GM13976 (cell line): ENCODE measurements at regions of chr18 and their contacts with region 1.

Region 1: GRCh38 chr18:48445540-48445939 is 36.4 kb upstream of the ZBTB7C start:
- DNase-seq: peak; percentile 70
- CTCF ChIP-seq: peak; percentile 88

Region 2: DNA sequence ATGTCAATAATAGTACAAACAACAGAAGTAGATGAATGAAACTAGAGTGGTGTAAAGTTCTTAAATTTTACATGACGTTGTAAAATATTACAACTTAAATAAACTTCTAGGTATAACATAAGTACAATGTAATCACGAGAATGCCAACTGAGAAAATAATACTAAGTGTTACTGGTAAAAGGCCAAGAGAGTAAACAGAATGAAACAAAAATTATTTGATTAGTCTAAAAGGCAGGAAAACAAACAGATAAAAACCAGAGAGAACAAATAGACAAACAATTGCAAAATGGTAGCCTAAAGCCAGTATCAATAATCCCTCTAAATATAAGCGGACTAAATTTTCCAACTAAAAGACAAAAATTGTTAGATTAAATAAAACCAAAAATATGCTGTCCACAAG is 586.9 kb before region 1 on chr18:
- in situ Hi-C with region 1: no loop called
- DNase-seq: no peak
- CTCF ChIP-seq: no peak

Region 3: DNA sequence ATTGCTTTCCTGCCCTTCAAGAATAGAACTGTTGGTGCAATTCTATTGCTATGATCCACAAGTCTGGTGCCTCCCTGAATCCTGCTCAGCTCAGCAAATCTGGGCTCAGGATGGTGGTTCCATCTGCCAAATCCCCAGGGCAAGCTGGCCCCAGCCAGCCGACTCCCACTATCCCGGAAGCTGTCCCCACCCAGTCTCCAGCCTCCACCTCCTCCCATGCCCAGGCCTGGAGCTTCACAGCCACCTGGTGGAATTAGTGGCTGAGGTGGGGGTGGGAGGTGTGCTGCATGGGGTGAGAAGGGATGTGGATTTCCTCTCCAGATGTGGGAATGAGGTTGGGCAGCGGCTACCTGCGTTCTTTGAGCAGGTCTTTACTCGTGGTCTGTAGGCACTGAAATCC is 395.8 kb before region 1 on chr18:
- in situ Hi-C with region 1: loop called (anchors 10 kb)
- DNase-seq: no peak
- CTCF ChIP-seq: no peak